Heart left ventricle (tissue), 16 donors: ENCODE measurements at regions of chr14 and their contacts with region 1.

Region 1: DNA sequence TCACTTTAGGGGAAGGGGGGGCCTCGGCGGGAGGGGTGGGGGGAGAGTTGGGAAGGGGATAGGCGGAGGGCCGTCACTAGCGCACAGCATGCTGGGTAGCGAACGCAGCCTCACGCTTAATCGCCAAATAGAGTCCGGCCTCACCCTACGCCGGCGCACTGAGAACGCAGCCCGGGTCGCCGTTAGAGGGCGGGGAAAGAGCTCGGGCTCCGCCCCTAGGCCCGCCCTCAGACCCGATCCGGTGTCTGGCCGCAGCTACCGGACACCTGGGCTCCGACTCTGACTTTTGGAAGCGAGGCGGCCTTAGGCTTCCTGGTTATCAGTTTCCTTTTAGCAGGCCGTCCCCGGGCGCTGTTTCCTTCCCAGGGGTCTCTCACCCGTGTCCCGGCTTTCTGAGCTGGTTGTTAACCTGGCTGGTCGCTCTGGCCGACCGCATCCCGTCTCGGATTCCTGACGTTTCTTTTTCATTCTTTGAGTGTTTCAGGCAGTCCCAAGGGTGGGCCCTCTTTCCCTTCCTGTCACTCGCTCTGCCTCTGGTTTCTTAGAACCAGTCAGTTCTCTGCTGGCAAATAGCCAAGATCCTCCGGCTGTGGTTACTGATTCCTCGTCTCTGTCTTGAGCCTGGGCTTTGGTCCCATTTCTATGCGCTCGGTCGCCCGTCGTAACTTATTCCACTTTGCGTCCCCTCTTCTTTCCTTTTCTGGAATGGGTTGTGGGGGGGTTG is 378 bp upstream of the STRN3 start:
- DNase-seq: peak; percentile 97 to 98 (median 97)
- ATAC-seq: peak; percentile 98 to 100 (median 99)
- H3K4me3 ChIP-seq: peak overlapping the region; percentile 64 to 99 (median 96)
- H3K27ac ChIP-seq: peak overlapping the region; percentile 87 to 100 (median 98)
- H3K4me1 ChIP-seq: peaks cover 3 to 36% (median 23%) of the 10 kb centered on the region in 12 donors
- H3K27me3 ChIP-seq: no peaks in the 10 kb centered on the region
- CTCF ChIP-seq: peak in 3 of 12 donors; percentile 16 to 26 (median 18)
- POLR2A ChIP-seq: peak in 1 of 2 donors; percentile 59

Region 2: GRCh38 chr14:30982533-30982932 is 44.0 kb before region 1 on chr14:
- intact Hi-C with region 1: loop called in 2 of 10 experiments (anchors 2 to 5 kb)
- DNase-seq: no peak
- ATAC-seq: no peak
- H3K4me3 ChIP-seq: no peak overlapping the region
- H3K27ac ChIP-seq: no peak overlapping the region
- H3K4me1 ChIP-seq: peaks cover 0 to 29% (median 0%) of the 10 kb centered on the region in 12 donors
- H3K27me3 ChIP-seq: no peaks in the 10 kb centered on the region
- CTCF ChIP-seq: no peak
- POLR2A ChIP-seq: no peak

Region 3: GRCh38 chr14:31068235-31068634 is 41.7 kb after region 1 on chr14:
- intact Hi-C with region 1: loop called in 1 of 10 experiments (anchors 5 kb)
- DNase-seq: no peak
- ATAC-seq: peak in 3 of 4 donors; percentile 7 to 64 (median 38)
- H3K4me3 ChIP-seq: no peak overlapping the region
- H3K27ac ChIP-seq: peak overlapping the region in 1 of 12 donors; percentile 57
- H3K4me1 ChIP-seq: peaks cover 0 to 6% (median 0%) of the 10 kb centered on the region in 12 donors
- H3K27me3 ChIP-seq: no peaks in the 10 kb centered on the region
- CTCF ChIP-seq: no peak
- POLR2A ChIP-seq: no peak

Region 4: DNA sequence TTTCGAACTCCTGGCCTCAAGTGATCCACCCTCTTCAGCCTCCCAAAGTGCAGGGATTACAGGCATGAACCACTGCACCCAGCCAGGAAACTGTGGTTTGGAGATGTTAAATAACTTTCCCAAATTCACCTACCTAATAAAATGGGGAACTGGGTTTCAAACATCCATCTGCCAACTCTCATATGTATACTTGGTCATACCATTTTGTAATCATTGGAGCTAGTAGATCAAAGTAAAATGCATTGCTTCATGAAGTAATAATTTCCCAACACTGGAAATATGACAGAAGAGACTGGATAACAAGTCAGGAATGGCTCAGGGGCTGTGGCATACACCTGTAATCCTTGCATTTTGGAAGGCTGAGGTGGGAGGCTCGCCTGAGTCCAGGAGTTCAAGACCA is 186.3 kb after region 1 on chr14:
- intact Hi-C with region 1: no loop called
- DNase-seq: no peak
- ATAC-seq: no peak
- H3K4me3 ChIP-seq: no peak overlapping the region
- H3K27ac ChIP-seq: no peak overlapping the region
- H3K4me1 ChIP-seq: peaks cover 0 to 12% (median 8%) of the 10 kb centered on the region in 12 donors
- H3K27me3 ChIP-seq: no peaks in the 10 kb centered on the region
- CTCF ChIP-seq: no peak
- POLR2A ChIP-seq: no peak